ENCODE measurements at regions of chr4 and their contacts with region 1.

Region 1: DNA sequence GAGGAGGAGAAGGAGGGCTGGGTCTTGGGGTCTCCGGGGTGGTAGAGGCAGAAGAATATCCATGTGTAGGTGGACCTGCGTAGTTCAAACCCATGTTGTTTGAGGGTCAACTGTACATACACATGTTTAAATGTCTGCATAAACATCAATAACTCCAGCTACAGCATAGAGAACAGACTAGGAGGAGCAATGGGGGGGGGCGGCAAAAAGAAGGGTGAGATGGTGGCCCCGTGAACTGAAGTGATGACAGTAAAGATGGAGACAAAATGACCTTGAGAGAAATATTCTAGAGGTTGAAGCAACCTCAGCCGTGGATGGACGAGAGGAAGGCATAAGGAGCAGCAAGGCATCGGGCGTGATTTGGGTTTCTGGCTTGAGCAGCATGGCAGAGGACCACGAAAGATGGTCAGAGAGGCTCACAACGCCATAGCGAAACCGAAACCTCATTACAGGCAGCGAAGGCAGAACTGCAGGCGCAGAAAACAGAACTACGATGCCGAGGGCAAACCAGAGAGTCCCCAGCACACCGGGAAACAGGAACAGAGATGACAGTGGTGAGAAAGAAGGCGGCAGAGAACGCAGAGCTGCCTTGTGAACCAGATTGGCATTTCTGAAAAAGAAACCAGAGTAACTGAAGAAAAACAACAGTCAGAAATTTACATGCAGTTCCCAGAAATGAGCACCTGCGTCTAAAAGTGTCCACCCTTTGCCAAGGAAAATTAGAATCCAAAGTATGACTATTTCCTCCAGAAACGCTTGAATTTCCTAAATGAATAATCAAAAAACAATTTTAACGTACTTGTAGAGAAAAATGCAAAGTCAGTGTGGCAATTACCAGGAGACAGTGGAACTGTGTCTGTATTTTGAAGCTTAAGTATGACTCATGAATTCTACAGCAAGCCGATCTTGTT is 50.3 kb upstream of the ENPP6 start:
- DNase-seq: peak; percentile 53 to 60
- H3K4me3 ChIP-seq: peak overlapping the region in 1 of 4 donors; percentile 13
- H3K27ac ChIP-seq: peak overlapping the region in 4 of 5 donors; percentile 70 to 85 (median 76)
- H3K4me1 ChIP-seq: peaks cover 0 to 33% (median 9%) of the 10 kb centered on the region in 4 donors
- H3K27me3 ChIP-seq: no peaks in the 10 kb centered on the region
- CTCF ChIP-seq: no peak
- EP300 ChIP-seq: no peak
- POLR2A ChIP-seq: no peak

Region 2: DNA sequence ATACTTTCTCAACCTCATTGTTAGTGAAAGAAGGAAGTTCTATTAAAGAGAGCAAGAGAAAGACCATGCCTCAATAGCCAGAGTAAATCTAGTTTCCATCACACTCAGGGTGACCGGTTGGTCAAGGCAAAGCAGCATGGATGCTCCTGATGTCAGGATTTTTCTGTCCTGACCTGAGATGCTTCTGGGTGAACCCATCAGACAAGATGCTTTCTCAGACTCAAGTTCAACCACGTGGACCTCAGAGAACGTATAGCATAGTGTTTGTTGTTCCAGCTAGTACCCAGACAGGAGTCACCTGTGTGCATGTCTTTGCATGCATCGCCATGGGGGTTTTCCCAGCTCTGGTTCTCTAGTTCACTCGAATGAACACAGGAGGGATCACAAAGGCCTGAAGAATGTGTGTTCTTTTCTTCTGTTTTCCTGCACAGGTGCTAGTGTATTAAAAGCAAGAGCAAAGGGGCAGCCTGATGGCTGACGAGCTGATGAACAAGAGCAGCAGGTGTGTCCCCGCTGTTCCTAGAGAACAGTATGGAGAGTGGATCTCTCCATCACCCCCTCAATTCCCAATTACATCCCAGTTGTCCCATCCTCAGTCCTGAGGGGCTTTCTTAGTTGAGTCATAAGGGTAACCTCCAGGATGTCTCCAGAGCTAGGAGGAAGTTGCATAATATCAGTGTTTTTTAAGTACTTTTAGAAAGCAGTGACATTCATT is 60.3 kb after region 1 on chr4:
- intact Hi-C with region 1: no loop called
- DNase-seq: no peak
- H3K4me3 ChIP-seq: no peak overlapping the region
- H3K27ac ChIP-seq: peak overlapping the region in 3 of 5 donors; percentile 87 to 92 (median 87)
- H3K4me1 ChIP-seq: peaks cover 40 to 69% (median 44%) of the 10 kb centered on the region in 4 donors
- H3K27me3 ChIP-seq: no peaks in the 10 kb centered on the region
- CTCF ChIP-seq: no peak
- EP300 ChIP-seq: no peak
- POLR2A ChIP-seq: no peak

Region 3: GRCh38 chr4:184544788-184545409 is 277.0 kb after region 1 on chr4:
- intact Hi-C with region 1: loop called (anchors 5 kb)
- DNase-seq: no peak
- H3K4me3 ChIP-seq: no peak overlapping the region
- H3K27ac ChIP-seq: no peak overlapping the region
- H3K4me1 ChIP-seq: no peaks in the 10 kb centered on the region
- H3K27me3 ChIP-seq: peaks cover 0 to 10% (median 0%) of the 10 kb centered on the region in 3 donors
- CTCF ChIP-seq: no peak
- EP300 ChIP-seq: no peak
- POLR2A ChIP-seq: no peak

Measured in stomach (tissue), 19 donors.